BJ (cell line): ENCODE measurements at regions of chrX and their contacts with region 1.

Region 1: GRCh38 chrX:71178908-71179307 is 34.3 kb downstream of the NLGN3 start:
- DNase-seq: no peak
- H3K4me3 ChIP-seq: no peak overlapping the region
- H3K27me3 ChIP-seq: no peaks in the 10 kb centered on the region
- CTCF ChIP-seq: peak; percentile 58

Region 2: GRCh38 chrX:70970482-70970995 is 208.4 kb before region 1 on chrX:
- CTCF ChIA-PET with region 1: interaction called, 26 read pairs
- POLR2A ChIA-PET with region 1: no interaction called
- DNase-seq: no peak
- H3K4me3 ChIP-seq: no peak overlapping the region
- H3K27me3 ChIP-seq: no peaks in the 10 kb centered on the region
- CTCF ChIP-seq: peak; percentile 29; the same call in 1 of the 2 replicates